ENCODE measurements at regions of chrX and their contacts with region 1.

Region 1: GRCh38 chrX:114959729-114960128 is 57.7 kb downstream of the IL13RA2 start:
- DNase-seq: peak; percentile 27
- H3K4me3 Mint-ChIP-seq: no peak overlapping the region
- H3K27ac Mint-ChIP-seq: no peak overlapping the region
- H3K4me1 Mint-ChIP-seq: no peaks in the 10 kb centered on the region
- H3K27me3 Mint-ChIP-seq: peaks cover 48% of the 10 kb centered on the region
- CTCF ChIP-seq: peak; percentile 46

Region 2: GRCh38 chrX:114344756-114345349 is 614.9 kb before region 1 on chrX:
- CTCF ChIA-PET with region 1: interaction called, 3 read pairs
- POLR2A ChIA-PET with region 1: no interaction called
- intact Hi-C with region 1: loop called (anchors 1 kb)
- DNase-seq: peak; percentile 56
- H3K4me3 Mint-ChIP-seq: no peak overlapping the region
- H3K27ac Mint-ChIP-seq: no peak overlapping the region
- H3K4me1 Mint-ChIP-seq: no peaks in the 10 kb centered on the region
- H3K27me3 Mint-ChIP-seq: peaks cover 56% of the 10 kb centered on the region
- CTCF ChIP-seq: peak; percentile 66

Region 3: DNA sequence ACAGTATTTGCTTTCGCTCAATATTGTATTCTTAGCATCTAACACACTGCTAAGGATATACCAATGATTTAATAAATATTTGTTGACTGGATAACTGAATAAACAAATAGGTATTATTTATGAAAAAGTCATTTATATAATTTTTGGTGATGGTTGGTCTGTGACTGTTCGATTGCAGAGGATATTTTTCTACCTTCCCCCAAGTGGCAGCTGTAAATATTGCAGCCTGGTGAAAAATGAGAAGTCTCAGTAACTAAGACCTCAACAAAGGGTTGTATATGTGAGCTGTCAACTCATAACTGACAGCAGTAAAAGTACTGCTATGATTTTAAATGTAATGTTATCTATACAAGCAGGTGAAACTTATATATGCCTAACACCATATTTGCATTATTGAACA is 339.9 kb before region 1 on chrX:
- CTCF ChIA-PET with region 1: interaction called, 55 read pairs
- POLR2A ChIA-PET with region 1: no interaction called
- intact Hi-C with region 1: no loop called
- DNase-seq: peak; percentile 33
- H3K4me3 Mint-ChIP-seq: no peak overlapping the region
- H3K27ac Mint-ChIP-seq: no peak overlapping the region
- H3K4me1 Mint-ChIP-seq: peaks cover 6% of the 10 kb centered on the region
- H3K27me3 Mint-ChIP-seq: peaks cover 50% of the 10 kb centered on the region
- CTCF ChIP-seq: peak; percentile 38

Region 4: GRCh38 chrX:114626323-114626722 is 333.4 kb before region 1 on chrX:
- CTCF ChIA-PET with region 1: interaction called, 55 read pairs
- POLR2A ChIA-PET with region 1: no interaction called
- intact Hi-C with region 1: loop called (anchors 1 kb)
- DNase-seq: peak; percentile 41
- H3K4me3 Mint-ChIP-seq: no peak overlapping the region
- H3K27ac Mint-ChIP-seq: no peak overlapping the region
- H3K4me1 Mint-ChIP-seq: no peaks in the 10 kb centered on the region
- H3K27me3 Mint-ChIP-seq: peaks cover 52% of the 10 kb centered on the region
- CTCF ChIP-seq: peak; percentile 46

Region 5: DNA sequence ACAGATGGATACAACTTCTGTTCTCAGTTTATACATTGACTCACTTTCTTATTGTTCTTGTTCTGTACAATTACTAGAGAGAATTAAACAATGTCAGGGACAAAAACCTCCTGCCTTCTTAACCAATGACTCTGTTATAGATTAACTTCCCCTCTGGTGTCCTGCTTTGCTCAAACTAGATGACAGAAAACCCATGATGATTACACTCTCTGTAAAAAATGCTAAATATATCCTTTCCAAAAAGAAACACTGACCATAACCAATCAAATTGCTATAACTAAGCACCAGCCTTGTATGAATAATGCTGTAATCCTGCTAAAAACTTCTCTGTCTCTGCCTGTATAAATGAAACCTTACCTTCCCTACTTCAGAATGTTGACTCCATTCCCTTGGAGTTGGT is 87.5 kb after region 1 on chrX:
- CTCF ChIA-PET with region 1: no interaction called
- POLR2A ChIA-PET with region 1: no interaction called
- intact Hi-C with region 1: no loop called
- DNase-seq: no peak
- H3K4me3 Mint-ChIP-seq: no peak overlapping the region
- H3K27ac Mint-ChIP-seq: no peak overlapping the region
- H3K4me1 Mint-ChIP-seq: no peaks in the 10 kb centered on the region
- H3K27me3 Mint-ChIP-seq: peaks cover 65% of the 10 kb centered on the region
- CTCF ChIP-seq: no peak

Region 6: GRCh38 chrX:115147220-115147619 is 187.5 kb after region 1 on chrX:
- CTCF ChIA-PET with region 1: no interaction called
- POLR2A ChIA-PET with region 1: interaction called, 3 read pairs
- intact Hi-C with region 1: loop called (anchors 10 kb)
- DNase-seq: peak; percentile 25
- H3K4me3 Mint-ChIP-seq: no peak overlapping the region
- H3K27ac Mint-ChIP-seq: no peak overlapping the region
- H3K4me1 Mint-ChIP-seq: no peaks in the 10 kb centered on the region
- H3K27me3 Mint-ChIP-seq: peaks cover 49% of the 10 kb centered on the region
- CTCF ChIP-seq: peak; percentile 46

Region 7: DNA sequence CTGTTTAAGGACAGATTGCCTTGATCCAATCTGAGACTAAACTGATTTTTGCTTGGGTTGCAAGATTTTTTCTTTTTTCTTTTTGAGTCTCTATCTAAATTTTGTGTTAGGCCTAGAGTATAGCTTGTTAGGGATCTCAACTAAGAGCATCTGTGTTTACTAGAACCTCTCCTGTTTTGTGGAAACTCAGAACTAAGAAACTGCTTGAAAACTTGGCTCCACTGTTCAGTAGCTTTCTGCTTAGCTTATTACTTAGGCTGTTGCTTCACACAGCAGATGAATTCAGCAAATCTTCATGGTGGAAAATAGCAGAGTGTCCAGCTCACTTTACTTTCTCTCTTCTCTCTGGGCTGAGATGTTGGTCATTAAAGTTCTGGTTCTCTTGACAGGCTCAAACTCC is 1440.0 kb after region 1 on chrX:
- CTCF ChIA-PET with region 1: no interaction called
- POLR2A ChIA-PET with region 1: no interaction called
- intact Hi-C with region 1: no loop called
- DNase-seq: no peak
- H3K4me3 Mint-ChIP-seq: no peak overlapping the region
- H3K27ac Mint-ChIP-seq: no peak overlapping the region
- H3K4me1 Mint-ChIP-seq: no peaks in the 10 kb centered on the region
- H3K27me3 Mint-ChIP-seq: peaks cover 45% of the 10 kb centered on the region
- CTCF ChIP-seq: no peak